GM12878 (cell line): ENCODE measurements at regions of chr1 and their contacts with region 1.

Region 1: DNA sequence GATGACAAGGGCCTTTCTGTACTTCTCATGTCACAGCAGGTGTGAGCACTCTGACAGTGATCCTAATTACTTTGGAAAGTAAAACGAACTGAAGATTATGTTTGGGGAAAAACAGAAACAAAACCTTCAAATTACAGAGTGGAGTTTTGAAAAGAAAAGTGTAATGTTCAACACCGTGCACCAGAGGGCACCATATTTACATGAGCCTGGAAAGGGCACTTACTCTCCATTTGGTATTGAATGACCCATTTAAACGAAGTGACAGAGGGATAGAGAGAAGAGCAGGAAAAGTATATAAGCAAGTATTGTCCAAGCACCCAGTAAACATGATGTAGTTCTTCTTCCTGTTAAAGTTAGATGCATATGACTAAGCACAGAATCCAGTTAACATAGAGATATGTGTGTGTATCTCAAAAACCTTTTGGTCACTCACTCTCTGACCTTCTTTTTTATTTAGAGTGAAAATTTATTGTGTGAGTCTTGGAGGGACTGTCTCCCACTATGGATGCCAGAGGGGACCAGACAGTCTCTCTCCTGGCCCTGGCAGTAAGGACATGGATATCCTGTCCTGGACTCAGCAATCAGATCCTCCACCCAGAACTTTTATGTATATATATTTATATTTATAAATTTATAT is 3.8 kb upstream of the RGSL1 start:
- DNase-seq: peak; percentile 26
- ATAC-seq: peak; percentile 87
- H3K4me3 ChIP-seq: no peak overlapping the region
- H3K27ac ChIP-seq: no peak overlapping the region
- H3K4me1 ChIP-seq: peaks cover 15% of the 10 kb centered on the region
- H3K27me3 ChIP-seq: no peaks in the 10 kb centered on the region
- CTCF ChIP-seq: peak; percentile 60 to 80 (median 61)
- EP300 ChIP-seq: no peak
- POLR2A ChIP-seq: no peak
- RAD21 ChIP-seq: peak; percentile 90

Region 2: GRCh38 chr1:182235952-182236650 is 210.1 kb before region 1 on chr1:
- CTCF ChIA-PET with region 1: no interaction called
- POLR2A ChIA-PET with region 1: no interaction called
- RAD21 ChIA-PET with region 1: no interaction called
- SMC1A ChIA-PET with region 1: no interaction called
- in situ Hi-C with region 1: no loop called
- intact Hi-C with region 1: no loop called
- DNase-seq: no peak
- ATAC-seq: peak; percentile 27; the same call in 2 of the 3 replicates
- H3K4me3 ChIP-seq: no peak overlapping the region
- H3K27ac ChIP-seq: no peak overlapping the region
- H3K4me1 ChIP-seq: no peaks in the 10 kb centered on the region
- H3K27me3 ChIP-seq: no peaks in the 10 kb centered on the region
- CTCF ChIP-seq: no peak
- EP300 ChIP-seq: no peak
- POLR2A ChIP-seq: no peak
- RAD21 ChIP-seq: no peak

Region 3: DNA sequence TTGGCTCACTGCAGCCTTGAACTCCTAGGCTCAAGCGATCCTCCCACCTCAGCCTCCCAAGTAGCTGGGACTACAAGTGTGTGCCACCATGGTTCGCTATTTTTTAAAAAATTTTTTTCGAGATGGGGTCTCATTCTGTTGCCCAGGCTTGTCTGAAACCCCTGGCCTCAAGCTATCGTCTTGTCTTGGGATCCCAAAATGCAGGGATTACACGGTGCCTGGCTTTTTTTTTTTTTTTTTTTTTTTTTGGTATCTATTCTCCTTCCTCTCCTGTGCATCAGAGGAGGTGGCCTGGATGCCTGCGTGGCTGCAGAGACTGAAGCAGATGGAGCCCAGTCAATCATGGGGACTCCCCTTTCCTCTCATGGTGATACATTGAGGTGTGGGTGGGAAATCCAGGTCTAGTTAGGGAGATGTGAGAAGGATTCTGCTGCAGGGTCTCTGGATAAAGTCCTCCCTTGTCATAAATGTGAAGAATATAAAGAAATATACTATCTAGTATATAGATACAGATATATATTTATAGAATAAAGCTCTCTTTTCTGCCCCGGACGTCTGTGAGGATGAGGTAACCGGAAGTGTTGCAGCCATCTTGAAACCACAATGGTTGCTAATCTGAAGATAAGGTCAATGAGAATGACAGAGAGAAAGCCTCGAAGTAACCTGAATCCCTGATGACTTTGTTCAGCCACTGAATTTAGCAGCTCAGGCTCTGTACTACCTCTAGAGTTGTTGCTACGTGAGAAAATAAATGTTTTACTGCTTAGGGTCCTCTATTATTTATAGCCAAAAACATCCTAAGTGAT is 15.7 kb before region 1 on chr1:
- CTCF ChIA-PET with region 1: interaction called, 10 read pairs
- POLR2A ChIA-PET with region 1: no interaction called
- RAD21 ChIA-PET with region 1: interaction called, 9 read pairs
- SMC1A ChIA-PET with region 1: interaction called, 12 read pairs
- in situ Hi-C with region 1: no loop called
- intact Hi-C with region 1: no loop called
- DNase-seq: peak; percentile 50
- ATAC-seq: peak; percentile 52
- H3K4me3 ChIP-seq: no peak overlapping the region
- H3K27ac ChIP-seq: peak overlapping the region; percentile 48
- H3K4me1 ChIP-seq: peaks cover 34% of the 10 kb centered on the region
- H3K27me3 ChIP-seq: no peaks in the 10 kb centered on the region
- CTCF ChIP-seq: no peak
- EP300 ChIP-seq: 0 out of 4 replicates have a peak, but pooled peaks of 1 of the 2 experiments have one; percentile 26
- POLR2A ChIP-seq: no peak
- RAD21 ChIP-seq: no peak